Psoas muscle (tissue), 8 donors: ENCODE measurements at regions of chr6 and their contacts with region 1.

Region 1: DNA sequence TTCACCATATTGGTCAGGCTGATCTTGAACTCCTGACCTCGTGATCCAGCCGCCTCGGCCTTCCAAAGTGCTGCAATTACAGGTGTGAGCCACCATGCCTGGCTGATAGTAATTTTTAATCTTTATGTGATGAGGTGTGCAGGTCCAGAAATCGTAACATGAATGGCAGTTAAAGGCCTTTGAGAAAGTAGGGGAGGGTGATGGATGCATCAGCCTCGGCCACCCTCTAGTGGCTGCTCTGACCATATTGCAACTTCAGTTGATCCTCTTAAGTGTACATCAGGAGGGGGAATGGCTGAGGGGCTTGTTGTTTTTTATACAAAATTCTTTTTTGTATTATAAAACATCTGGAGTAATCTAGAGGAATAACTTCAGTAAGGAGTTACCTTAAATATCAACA is 193.0 kb downstream of the ZFAND3 start:
- DNase-seq: no peak
- ATAC-seq: peak; percentile 80 to 90 (median 86)
- H3K4me3 ChIP-seq: no peak overlapping the region
- H3K27ac ChIP-seq: no peak overlapping the region
- H3K4me1 ChIP-seq: peaks cover 44% of the 10 kb centered on the region
- H3K27me3 ChIP-seq: no peaks in the 10 kb centered on the region
- CTCF ChIP-seq: peak; percentile 69

Region 2: DNA sequence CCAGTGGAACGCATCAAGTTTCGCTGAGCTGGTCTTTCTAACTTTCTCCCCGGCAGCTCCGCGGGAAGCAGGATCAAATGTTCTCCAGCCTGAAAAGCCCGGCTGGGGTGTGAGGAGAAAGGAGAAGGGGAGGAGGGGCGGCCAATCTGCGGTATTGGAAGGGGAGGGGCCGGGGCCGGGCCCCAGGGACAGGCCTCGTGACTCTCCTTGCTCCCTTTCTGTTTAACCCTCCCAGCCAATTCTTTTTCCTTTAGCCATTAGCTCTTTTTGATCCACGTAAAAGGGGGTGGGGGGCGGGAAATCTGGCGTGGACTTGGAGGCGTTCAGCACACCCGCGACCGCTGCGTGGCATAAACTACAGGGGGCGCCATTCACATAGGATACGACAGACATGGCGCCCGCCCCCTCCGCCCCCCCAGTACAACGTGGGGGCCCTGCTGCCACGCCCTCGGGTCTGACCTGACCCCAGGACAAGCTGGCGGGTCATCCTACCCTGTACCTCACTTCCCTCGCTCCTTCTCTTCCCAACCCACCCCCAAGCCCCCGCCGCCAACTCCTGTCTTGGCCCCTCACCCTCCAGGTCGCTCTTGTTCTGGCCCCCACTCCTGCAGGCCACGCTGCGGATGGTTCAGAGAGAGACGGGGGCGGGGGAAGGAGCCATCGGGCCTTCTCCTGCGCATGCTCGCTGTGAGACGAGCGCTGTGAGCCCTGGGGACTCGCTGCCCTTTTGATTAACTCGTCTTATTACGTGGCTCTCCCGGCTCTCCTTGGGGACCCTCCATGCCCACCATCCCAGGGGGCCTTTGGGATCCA is 307.1 kb before region 1 on chr6:
- intact Hi-C with region 1: loop called in 1 of 2 experiments (anchors 10 kb)
- DNase-seq: peak; percentile 83 to 88
- ATAC-seq: peak; percentile 80 to 93 (median 83)
- H3K4me3 ChIP-seq: peak overlapping the region; percentile 59
- H3K27ac ChIP-seq: peak overlapping the region; percentile 41
- H3K4me1 ChIP-seq: peaks cover 5% of the 10 kb centered on the region
- H3K27me3 ChIP-seq: no peaks in the 10 kb centered on the region
- CTCF ChIP-seq: peak; percentile 55

Region 3: DNA sequence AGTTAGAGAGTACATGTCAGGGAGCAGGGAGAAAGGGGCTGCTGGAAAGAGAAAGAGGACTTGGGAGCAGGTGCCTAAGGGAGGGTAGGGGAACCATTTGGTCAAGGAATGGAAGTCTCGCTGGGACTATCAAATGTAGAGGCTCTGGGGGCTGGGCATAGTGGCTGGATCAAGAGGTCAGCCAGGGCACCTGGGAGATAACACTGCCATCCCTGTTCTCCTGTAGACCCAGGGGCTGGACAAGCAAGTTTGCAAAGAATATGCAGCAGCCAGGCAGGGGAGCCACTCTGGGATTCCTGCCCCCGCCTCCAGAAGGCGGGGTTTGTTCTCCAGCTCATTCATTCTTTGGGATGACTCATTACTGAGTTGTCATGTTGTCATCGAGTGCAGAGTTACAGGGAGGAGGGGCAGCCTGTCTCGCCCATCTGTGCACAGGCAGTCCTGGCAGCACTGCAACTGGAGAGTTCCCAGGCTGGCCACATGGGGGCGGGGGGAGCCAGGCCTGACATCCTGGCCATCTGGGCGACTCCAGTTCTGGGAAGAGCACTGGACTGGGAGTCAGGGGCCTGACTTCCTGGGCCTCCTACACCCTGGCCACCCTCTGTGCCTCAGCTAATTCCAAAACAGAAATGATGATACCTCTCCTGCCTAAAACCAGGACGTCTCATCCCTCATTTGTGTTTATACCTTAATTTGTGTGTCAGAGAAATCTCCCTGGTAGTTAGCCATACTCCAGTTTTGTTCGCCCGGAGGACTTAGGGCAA is 221.2 kb before region 1 on chr6:
- intact Hi-C with region 1: loop called (anchors 5 kb)
- DNase-seq: peak; percentile 93 to 96
- ATAC-seq: peak; percentile 89 to 96 (median 93)
- H3K4me3 ChIP-seq: no peak overlapping the region
- H3K27ac ChIP-seq: peak overlapping the region; percentile 46
- H3K4me1 ChIP-seq: peaks cover 24% of the 10 kb centered on the region
- H3K27me3 ChIP-seq: no peaks in the 10 kb centered on the region
- CTCF ChIP-seq: peak; percentile 96

Region 4: DNA sequence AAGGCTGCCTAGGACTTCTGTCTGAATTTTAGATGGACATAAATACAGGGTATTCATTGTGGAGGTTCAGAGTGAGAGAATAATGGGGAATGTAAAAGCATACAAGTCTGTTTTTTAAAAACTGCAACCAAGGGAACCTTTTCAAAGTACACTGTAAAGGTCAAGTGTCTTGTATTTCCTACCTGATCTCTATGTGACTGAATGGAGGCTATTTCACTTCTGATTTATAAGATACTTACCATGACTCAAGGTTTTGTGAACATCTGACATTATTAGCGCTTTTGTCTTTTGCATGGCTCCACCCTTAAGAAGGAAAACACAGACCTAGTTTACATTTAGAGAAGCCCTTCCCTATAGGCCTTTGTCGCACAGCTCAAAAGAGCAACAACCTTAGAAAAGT is 66.5 kb before region 1 on chr6:
- intact Hi-C with region 1: no loop called
- DNase-seq: no peak
- ATAC-seq: peak in 2 of 4 donors; percentile 52 to 64
- H3K4me3 ChIP-seq: no peak overlapping the region
- H3K27ac ChIP-seq: no peak overlapping the region
- H3K4me1 ChIP-seq: peaks cover 45% of the 10 kb centered on the region
- H3K27me3 ChIP-seq: no peaks in the 10 kb centered on the region
- CTCF ChIP-seq: no peak

Region 5: DNA sequence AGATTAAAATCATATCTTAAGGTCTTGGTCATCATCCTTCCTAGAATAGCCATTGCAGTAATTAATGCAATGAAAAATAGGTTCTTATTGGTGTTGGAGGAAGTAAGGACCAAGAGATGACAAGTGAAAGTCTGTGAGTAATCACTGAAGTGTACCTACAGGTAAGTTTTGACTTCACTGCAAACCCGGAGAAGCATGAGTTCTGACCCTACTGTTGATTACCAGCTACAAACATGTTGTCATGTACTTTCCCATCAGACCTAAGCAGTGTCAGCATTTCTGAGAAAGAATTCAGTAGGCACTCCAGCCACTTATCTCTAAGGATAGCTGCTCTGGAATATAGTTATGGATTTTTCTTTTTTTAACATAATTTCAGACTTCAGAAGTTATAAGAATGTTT is 87.8 kb after region 1 on chr6:
- intact Hi-C with region 1: no loop called
- DNase-seq: no peak
- ATAC-seq: no peak
- H3K4me3 ChIP-seq: no peak overlapping the region
- H3K27ac ChIP-seq: no peak overlapping the region
- H3K4me1 ChIP-seq: no peaks in the 10 kb centered on the region
- H3K27me3 ChIP-seq: no peaks in the 10 kb centered on the region
- CTCF ChIP-seq: no peak